SK-MEL-5 (cell line): ENCODE measurements at regions of chr7 and their contacts with region 1.

Region 1: DNA sequence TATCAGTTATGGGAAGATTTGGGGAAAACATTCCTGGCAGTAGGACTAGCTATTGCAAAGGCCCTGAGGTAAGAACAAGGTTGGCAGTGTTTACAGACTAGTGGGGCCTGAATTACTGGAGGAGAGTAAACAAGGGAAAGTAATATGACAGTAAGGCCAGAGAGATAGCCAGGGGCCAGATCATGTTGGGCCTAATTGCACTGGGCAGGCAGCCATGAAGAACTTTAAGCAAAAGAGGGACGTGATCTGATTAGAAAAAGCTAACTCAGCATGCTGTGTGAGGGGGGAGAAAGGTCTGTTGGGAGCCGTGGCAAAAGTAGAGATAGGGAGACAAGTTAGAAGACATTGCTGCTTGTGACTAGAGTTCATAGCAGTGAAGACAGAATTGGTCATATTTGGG is 9.2 kb downstream of the NUP42 start:
- DNase-seq: peak; percentile 79

Region 2: GRCh38 chr7:23261843-23262452 is 70.9 kb after region 1 on chr7:
- in situ Hi-C with region 1: loop called (anchors 10 kb)
- DNase-seq: peak; percentile 84

Region 3: GRCh38 chr7:24477398-24478136 is 1286.5 kb after region 1 on chr7:
- in situ Hi-C with region 1: no loop called
- DNase-seq: no peak